Kidney (tissue), 22 donors: ENCODE measurements at regions of chr5 and their contacts with region 1.

Region 1: GRCh38 chr5:88875341-88876234 is 7.4 kb downstream of the MEF2C start:
- DNase-seq: no peak
- H3K4me3 ChIP-seq: peak overlapping the region in 1 of 3 donors; percentile 22
- H3K27ac ChIP-seq: no peak overlapping the region
- H3K4me1 ChIP-seq: peaks cover 0 to 4% (median 0%) of the 10 kb centered on the region in 3 donors
- H3K27me3 ChIP-seq: no peaks in the 10 kb centered on the region
- CTCF ChIP-seq: no peak

Region 2: DNA sequence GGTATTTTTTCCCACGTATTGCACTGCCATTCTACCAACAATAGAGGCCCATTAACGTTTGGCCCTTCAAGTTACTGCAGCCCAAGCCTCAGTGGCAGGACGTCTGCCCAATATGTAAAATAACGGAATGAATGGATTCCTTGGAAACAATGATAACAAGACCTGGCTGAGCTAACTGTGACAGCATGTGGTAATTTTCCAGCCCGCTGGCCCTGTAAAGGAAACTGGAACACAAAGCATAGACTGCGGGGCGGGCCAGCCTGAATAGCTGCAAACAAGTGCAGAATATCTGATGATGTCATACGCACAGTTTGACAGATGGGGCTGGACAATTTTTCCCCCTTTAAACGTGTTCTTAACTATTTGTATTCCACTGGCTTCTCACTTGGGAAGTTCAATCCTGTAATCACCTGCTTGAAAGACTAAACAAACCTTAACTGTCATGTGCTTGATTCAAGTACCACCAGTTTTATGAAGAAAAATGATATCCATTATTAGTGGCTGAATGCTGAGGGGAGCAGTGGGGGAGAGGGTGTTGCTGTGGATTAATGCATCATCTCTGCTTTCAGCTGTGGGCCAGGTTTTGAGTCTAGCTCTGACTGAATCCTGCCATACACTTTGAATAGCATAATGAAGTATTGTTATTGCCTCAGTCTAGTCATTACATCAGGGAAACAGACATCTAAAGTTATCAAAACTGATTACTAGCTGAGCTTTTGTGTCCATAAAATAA is 930.9 kb before region 1 on chr5:
- intact Hi-C with region 1: no loop called
- DNase-seq: peak in 1 of 5 donors; percentile 3
- H3K4me3 ChIP-seq: no peak overlapping the region
- H3K27ac ChIP-seq: no peak overlapping the region
- H3K4me1 ChIP-seq: no peaks in the 10 kb centered on the region
- H3K27me3 ChIP-seq: no peaks in the 10 kb centered on the region
- CTCF ChIP-seq: no peak

Region 3: GRCh38 chr5:88690409-88691229 is 185.0 kb before region 1 on chr5:
- intact Hi-C with region 1: no loop called
- DNase-seq: peak; percentile 80 to 90 (median 81)
- H3K4me3 ChIP-seq: peak overlapping the region in 1 of 3 donors; percentile 11
- H3K27ac ChIP-seq: no peak overlapping the region
- H3K4me1 ChIP-seq: peaks cover 0 to 4% (median 0%) of the 10 kb centered on the region in 3 donors
- H3K27me3 ChIP-seq: peaks cover 88% of the 10 kb centered on the region
- CTCF ChIP-seq: peak; percentile 97

Region 4: GRCh38 chr5:88746438-88746882 is 129.1 kb before region 1 on chr5:
- intact Hi-C with region 1: loop called (anchors 10 kb)
- DNase-seq: no peak
- H3K4me3 ChIP-seq: no peak overlapping the region
- H3K27ac ChIP-seq: no peak overlapping the region
- H3K4me1 ChIP-seq: peaks cover 0 to 6% (median 2%) of the 10 kb centered on the region in 3 donors
- H3K27me3 ChIP-seq: no peaks in the 10 kb centered on the region
- CTCF ChIP-seq: no peak

Region 5: DNA sequence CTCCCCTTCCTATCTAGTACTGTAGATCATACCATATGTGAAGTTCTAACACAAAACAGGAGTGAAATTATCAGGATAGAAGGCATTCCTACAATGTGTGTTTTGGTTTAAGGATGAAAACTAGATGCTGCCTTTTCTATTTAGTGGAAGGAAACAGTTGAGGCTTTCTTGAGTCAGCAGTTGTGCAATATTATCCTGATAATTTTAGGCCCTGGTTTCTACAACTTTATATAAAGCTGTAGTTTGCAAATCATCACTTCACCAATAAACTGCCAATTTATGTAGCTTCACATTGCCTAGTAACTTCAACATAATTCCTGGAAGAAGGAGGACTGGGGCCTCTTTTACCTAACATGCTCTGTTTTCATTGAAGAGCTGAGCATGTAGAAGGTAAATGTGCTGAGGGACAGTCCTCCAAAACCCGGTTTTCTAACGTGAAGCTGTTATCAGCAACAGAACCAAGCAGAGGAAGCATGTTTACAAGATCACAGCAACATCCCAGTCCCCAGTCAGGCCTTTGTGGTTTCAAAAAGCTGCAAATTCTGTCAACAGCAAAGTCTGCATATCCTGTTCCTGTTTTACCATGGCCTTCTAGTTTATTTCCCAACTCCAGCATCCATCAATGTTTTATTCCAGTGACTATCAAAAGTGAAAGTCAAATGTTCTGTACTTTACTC is 520.8 kb after region 1 on chr5:
- intact Hi-C with region 1: no loop called
- DNase-seq: peak in 1 of 5 donors; percentile 19
- H3K4me3 ChIP-seq: no peak overlapping the region
- H3K27ac ChIP-seq: no peak overlapping the region
- H3K4me1 ChIP-seq: no peaks in the 10 kb centered on the region
- H3K27me3 ChIP-seq: no peaks in the 10 kb centered on the region
- CTCF ChIP-seq: no peak